Heart right ventricle (tissue), 16 donors: ENCODE measurements at regions of chr9 and their contacts with region 1.

Region 1: DNA sequence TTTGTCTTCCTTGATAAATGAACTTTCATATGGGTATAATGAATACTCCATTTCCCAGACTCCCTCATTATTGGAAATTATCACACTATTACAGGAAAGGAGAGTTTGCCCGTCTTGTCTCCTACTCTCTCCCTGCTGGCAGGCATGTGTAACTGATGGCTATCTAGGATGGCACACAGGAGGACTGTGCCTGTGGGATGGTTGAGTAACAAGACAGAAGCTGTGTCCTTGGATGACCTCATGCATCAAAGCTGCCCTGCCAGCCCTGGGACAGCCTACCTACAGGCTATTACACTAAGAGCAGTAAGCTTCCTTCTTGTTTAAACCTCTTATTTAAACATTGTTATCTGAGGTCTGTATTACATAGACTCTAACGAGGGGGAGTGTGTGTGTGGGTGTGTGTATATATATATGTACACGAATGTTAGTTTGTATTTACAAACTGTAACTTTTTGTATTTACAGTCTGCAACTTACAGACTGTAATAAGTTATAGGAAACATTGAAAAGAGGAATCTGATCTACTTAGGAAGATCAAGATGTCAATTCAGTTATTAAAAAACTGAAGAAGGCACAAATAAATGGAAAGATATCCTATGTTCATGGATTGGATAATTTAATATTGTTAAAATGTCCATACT is 247.6 kb upstream of the ACO1 start:
- DNase-seq: no peak
- ATAC-seq: no peak
- H3K4me3 ChIP-seq: no peak overlapping the region
- H3K27ac ChIP-seq: no peak overlapping the region
- H3K4me1 ChIP-seq: no peaks in the 10 kb centered on the region
- H3K27me3 ChIP-seq: no peaks in the 10 kb centered on the region
- CTCF ChIP-seq: no peak

Region 2: DNA sequence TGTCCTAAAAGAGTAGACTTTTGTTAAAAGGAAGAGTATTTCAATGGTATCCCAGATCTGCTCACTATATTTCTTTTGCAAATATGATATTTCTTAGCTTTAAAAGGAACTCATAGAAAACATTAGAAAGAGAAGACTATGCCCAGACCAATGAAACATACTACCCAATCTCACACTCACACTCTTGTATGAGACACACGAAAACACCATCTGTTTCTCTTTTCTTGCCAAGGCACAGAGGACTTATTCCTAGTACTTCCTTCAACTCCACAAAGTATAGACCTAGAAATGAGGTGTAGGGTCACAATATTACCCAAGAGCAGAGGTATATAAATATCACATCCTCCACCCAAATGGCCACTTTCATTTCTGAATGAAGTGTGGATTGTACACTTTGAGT is 44.8 kb before region 1 on chr9:
- intact Hi-C with region 1: loop called in 1 of 10 experiments (anchors 10 kb)
- DNase-seq: no peak
- ATAC-seq: no peak
- H3K4me3 ChIP-seq: no peak overlapping the region
- H3K27ac ChIP-seq: no peak overlapping the region
- H3K4me1 ChIP-seq: no peaks in the 10 kb centered on the region
- H3K27me3 ChIP-seq: no peaks in the 10 kb centered on the region
- CTCF ChIP-seq: no peak

Region 3: DNA sequence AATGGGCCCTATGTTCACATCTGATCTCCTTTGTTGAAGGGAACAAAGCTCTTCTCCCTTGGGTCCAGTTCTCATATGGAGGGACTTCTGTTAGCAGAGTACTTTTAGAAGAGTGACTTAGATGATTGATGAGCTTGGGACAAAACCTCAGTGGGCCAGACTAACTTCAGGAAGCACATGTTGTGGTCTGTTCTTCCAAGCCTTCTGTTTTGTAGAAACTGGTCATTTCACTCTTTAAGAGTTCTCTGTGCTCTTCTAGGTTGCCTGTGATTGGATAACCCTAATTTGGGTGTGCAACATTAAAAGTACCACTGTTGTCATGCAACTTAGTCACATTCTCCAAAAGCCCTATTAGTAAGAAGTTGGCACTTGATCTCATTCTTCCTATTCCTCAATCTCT is 64.1 kb after region 1 on chr9:
- intact Hi-C with region 1: no loop called
- DNase-seq: no peak
- ATAC-seq: no peak
- H3K4me3 ChIP-seq: no peak overlapping the region
- H3K27ac ChIP-seq: no peak overlapping the region
- H3K4me1 ChIP-seq: no peaks in the 10 kb centered on the region
- H3K27me3 ChIP-seq: no peaks in the 10 kb centered on the region
- CTCF ChIP-seq: no peak